ENCODE measurements at regions of chr3 and their contacts with region 1.

Region 1: GRCh38 chr3:29291262-29291981 is 10.6 kb downstream of the RBMS3 start:
- DNase-seq: no peak
- H3K4me3 ChIP-seq: no peak overlapping the region
- H3K27ac ChIP-seq: peak overlapping the region in 1 of 5 donors; percentile 23
- H3K4me1 ChIP-seq: peaks cover 6 to 47% of the 10 kb centered on the region in 2 donors
- H3K27me3 ChIP-seq: no peaks in the 10 kb centered on the region
- CTCF ChIP-seq: no peak
- POLR2A ChIP-seq: no peak

Region 2: DNA sequence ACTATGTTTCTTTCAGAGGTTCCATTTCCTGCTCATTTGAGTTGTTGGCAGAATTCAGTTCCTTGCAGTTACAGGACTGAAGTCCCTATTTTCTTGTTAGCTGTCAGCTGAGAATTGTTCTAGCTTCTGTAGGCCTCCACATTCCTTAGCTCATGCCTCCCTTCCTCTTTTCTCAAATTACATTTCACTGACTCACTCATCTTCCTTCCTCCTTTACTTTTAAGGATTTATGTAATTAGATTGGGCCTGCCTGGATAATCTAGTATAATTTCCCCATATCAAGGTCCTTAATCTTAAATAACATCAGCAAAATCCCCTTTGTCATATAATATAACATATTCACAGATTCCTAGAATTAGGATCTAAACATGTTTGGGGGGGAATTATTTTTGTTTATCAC is 51.2 kb before region 1 on chr3:
- intact Hi-C with region 1: no loop called
- DNase-seq: no peak
- H3K4me3 ChIP-seq: no peak overlapping the region
- H3K27ac ChIP-seq: no peak overlapping the region
- H3K4me1 ChIP-seq: no peaks in the 10 kb centered on the region
- H3K27me3 ChIP-seq: no peaks in the 10 kb centered on the region
- CTCF ChIP-seq: no peak
- POLR2A ChIP-seq: no peak

Region 3: GRCh38 chr3:29412110-29412509 is 120.7 kb after region 1 on chr3:
- intact Hi-C with region 1: loop called in 1 of 2 experiments (anchors 10 kb)
- DNase-seq: no peak
- H3K4me3 ChIP-seq: no peak overlapping the region
- H3K27ac ChIP-seq: no peak overlapping the region
- H3K4me1 ChIP-seq: peaks cover 11 to 49% of the 10 kb centered on the region in 2 donors
- H3K27me3 ChIP-seq: no peaks in the 10 kb centered on the region
- CTCF ChIP-seq: no peak
- POLR2A ChIP-seq: no peak

Region 4: DNA sequence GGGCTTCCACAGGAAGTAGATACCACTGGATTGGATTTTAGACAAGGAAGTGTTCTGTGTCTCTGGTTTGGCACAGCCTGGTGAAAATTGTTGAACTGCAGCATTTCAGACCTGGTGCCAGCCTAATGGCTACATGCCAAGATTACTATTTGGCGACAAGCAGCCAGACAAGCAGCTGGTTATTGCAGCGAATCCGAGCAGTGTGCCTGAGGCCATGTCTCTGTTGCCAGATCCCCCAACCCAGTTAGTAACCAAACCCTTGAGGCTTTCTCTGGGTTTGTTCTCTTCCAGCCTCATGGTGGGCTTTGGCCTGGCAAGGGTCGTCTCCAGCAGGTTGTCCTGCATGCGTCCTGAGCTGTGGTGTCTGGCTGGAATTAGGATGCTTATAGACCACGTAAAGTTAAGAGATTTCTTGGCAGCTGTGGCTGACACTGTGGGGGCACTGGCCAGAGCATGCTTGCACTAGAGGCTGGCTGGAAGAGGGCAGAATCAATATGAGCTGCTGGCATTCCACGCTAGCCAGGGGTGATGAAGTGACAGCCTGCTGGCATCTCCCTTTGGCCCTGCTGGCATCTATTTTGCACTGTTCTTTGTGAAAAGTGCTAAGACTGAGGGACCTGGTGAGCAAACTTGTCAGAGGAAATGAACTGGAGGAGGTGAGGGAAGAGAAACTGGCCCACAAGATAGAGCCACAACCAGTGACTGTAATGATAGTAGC is 162.0 kb after region 1 on chr3:
- intact Hi-C with region 1: no loop called
- DNase-seq: peak in 4 of 7 donors; percentile 28 to 79 (median 33)
- H3K4me3 ChIP-seq: no peak overlapping the region
- H3K27ac ChIP-seq: peak overlapping the region in 1 of 5 donors; percentile 1
- H3K4me1 ChIP-seq: peaks cover 0 to 15% of the 10 kb centered on the region in 2 donors
- H3K27me3 ChIP-seq: no peaks in the 10 kb centered on the region
- CTCF ChIP-seq: no peak
- POLR2A ChIP-seq: no peak

Region 5: DNA sequence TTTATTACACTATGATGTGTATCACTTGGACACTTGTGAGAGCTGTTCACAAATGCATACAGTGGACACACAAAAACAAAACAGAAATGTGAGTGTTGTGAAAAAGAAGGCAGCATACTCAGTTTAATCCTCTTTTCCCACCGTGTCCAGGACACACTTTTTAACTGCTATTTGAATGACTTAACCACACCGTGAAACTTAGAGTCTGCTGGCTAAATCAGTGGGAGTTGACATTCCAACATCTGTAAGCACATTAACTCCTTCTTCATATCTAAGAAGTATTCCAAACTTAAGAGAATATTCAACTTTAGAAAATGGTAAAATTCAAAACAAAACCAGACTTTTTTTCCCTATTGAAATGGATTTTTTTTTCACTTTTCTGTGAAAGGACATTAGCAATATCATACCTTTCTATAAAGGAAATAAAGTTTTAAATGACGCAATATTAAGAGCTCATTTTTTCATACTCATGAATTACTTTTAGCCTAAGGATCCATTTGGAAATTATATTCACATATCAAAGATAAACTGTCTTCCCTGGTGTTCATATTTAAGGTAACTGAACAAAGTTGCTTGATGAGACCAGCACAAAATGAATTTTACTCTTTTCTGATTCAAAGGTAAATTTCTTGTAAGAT is 306.1 kb after region 1 on chr3:
- intact Hi-C with region 1: no loop called
- DNase-seq: no peak
- H3K4me3 ChIP-seq: no peak overlapping the region
- H3K27ac ChIP-seq: no peak overlapping the region
- H3K4me1 ChIP-seq: no peaks in the 10 kb centered on the region
- H3K27me3 ChIP-seq: no peaks in the 10 kb centered on the region
- CTCF ChIP-seq: no peak
- POLR2A ChIP-seq: no peak

Measured in adrenal gland (tissue), 19 donors.